Activated B cell treated with CpG ODN at 0.5 μM for 24 hours (primary cell): ENCODE measurements at regions of chr14 and their contacts with region 1.

Region 1: DNA sequence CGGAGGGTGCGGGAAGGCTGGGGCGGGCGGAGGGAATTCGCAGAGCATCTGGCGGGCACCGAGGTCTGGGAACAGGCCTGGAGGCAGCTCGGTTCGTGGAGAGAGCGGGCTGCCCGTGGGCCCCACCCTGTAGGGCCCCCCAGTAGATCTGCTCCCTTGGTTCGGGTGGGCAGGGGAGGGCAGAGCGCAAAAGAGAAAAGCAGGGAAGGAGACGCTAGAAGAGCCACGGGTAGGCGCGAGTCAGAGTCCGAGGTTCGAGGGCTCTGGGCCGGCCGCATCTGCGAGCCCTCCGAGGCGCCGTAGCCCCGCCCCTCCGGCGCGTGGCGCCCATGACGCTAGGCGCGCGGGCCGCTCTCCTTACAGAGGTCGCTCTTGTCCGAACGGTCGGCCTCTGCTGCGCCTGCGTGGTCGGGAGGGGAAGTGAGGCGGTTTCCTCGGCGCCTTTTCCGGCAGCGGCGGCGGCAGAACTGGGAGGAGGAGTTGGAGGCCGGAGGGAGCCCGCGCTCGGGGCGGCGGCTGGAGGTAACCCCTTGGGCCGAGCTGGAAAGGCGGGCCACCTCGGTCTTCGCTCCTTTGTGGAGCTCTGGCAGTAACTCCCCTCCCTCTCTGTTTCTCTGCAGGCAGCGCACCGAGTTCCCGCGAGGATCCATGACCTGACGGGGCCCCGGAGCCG is at the start of gene ARF6:
- DNase-seq: peak; percentile 98
- ATAC-seq: peak; percentile 85
- H3K4me3 Mint-ChIP-seq: peak within 1 kb of the TSS; percentile 96
- H3K27ac Mint-ChIP-seq: peak within 1 kb of the TSS; percentile 98
- H3K4me1 Mint-ChIP-seq: peaks cover 38% of the 10 kb centered on the region
- H3K27me3 Mint-ChIP-seq: no peaks in the 10 kb centered on the region
- CTCF ChIP-seq: no peak
- total RNA-seq, gene ARF6: 136 and 142 TPM in 2 replicates

Region 2: GRCh38 chr14:49879683-49880204 is 13.0 kb before region 1 on chr14:
- CTCF ChIA-PET with region 1: interaction called, 7 read pairs
- POLR2A ChIA-PET with region 1: interaction called, 21 read pairs
- intact Hi-C with region 1: loop called (anchors 1 kb)
- DNase-seq: no peak
- ATAC-seq: peak; percentile 90
- H3K4me3 Mint-ChIP-seq: no peak overlapping the region
- H3K27ac Mint-ChIP-seq: peak overlapping the region; percentile 47
- H3K4me1 Mint-ChIP-seq: peaks cover 14% of the 10 kb centered on the region
- H3K27me3 Mint-ChIP-seq: no peaks in the 10 kb centered on the region
- CTCF ChIP-seq: no peak

Region 3: GRCh38 chr14:49940808-49941421 is 48.1 kb after region 1 on chr14:
- CTCF ChIA-PET with region 1: interaction called, 3 read pairs
- POLR2A ChIA-PET with region 1: interaction called, 12 read pairs
- intact Hi-C with region 1: no loop called
- DNase-seq: no peak
- ATAC-seq: peak; percentile 42
- H3K4me3 Mint-ChIP-seq: peak overlapping the region; percentile 7
- H3K27ac Mint-ChIP-seq: peak overlapping the region; percentile 61
- H3K4me1 Mint-ChIP-seq: peaks cover 42% of the 10 kb centered on the region
- H3K27me3 Mint-ChIP-seq: no peaks in the 10 kb centered on the region
- CTCF ChIP-seq: no peak

Region 4: DNA sequence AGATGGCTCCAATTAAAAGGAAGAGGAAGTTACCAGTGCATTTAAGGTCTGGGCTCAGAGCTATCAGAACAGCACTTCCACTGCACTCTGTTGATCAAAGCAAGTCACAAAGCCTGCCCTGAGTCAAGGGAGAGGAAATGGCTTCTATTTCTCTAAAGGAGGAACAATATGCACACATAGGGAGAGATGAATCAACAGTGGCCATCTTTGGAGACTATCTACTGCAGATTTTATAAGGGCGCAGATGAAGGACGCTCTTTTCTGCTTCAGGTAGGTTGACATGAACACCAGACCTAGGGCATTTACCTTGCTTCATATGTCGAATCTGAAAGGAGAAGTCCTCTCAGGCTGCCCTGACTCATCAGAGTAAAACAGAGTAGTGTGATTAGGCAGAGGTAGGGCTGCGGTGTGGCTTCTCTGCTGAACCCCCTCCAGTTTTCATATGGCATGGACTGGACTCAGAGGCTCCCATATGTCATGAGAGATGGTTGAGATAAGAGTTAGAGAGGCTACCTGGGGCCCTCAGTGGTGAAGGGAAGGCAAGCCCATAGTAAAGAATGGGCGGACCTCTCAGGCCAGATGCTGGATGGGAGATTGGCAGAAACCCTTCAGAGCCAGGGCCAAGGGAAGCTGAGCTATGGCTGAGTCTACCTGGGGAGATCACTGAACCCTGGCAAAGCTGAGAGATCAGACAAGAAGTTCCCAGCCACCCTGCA is 84.5 kb after region 1 on chr14:
- CTCF ChIA-PET with region 1: interaction called, 12 read pairs
- POLR2A ChIA-PET with region 1: interaction called, 69 read pairs
- intact Hi-C with region 1: loop called (anchors 1 kb)
- DNase-seq: no peak
- ATAC-seq: peak; percentile 87
- H3K4me3 Mint-ChIP-seq: peak overlapping the region; percentile 76
- H3K27ac Mint-ChIP-seq: peak overlapping the region; percentile 95
- H3K4me1 Mint-ChIP-seq: peaks cover 88% of the 10 kb centered on the region
- H3K27me3 Mint-ChIP-seq: no peaks in the 10 kb centered on the region
- CTCF ChIP-seq: no peak

Region 5: DNA sequence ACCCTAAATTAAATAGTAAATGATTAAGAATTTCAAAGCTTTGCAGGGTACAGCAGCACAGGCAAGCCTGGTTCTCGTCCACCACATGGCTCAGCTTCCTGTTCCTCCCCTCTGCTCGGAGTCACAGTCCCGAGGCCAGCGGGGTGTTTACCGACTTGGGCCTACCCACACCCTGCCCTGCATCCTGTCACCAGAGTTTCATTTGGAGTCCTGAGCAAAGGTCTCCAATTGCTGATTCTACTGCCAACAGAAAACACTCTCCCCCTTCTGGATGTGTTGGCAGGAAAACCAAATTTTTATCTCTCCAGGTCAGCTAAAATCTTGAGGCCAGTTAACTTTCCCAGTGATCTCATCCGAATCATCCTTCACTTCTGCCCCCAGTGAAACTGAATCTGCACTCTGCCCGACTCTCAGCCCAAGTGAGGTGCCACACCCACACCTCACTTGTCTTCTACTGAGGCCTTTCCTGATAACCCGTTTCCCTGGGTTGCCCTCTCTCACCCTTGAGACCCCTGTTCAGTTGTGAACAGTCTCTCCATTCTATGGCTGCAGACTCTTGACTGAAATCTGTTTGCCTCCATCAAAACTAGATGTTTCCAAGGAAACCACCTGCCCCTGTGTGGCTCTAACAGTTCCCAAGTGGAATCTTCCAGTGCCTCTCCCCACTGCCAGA is 152.4 kb after region 1 on chr14:
- CTCF ChIA-PET with region 1: interaction called, 3 read pairs
- POLR2A ChIA-PET with region 1: interaction called, 13 read pairs
- intact Hi-C with region 1: loop called (anchors 1 kb)
- DNase-seq: no peak
- ATAC-seq: peak; percentile 70
- H3K4me3 Mint-ChIP-seq: peak overlapping the region; percentile 2
- H3K27ac Mint-ChIP-seq: peak overlapping the region; percentile 92
- H3K4me1 Mint-ChIP-seq: peaks cover 71% of the 10 kb centered on the region
- H3K27me3 Mint-ChIP-seq: no peaks in the 10 kb centered on the region
- CTCF ChIP-seq: no peak

Region 6: DNA sequence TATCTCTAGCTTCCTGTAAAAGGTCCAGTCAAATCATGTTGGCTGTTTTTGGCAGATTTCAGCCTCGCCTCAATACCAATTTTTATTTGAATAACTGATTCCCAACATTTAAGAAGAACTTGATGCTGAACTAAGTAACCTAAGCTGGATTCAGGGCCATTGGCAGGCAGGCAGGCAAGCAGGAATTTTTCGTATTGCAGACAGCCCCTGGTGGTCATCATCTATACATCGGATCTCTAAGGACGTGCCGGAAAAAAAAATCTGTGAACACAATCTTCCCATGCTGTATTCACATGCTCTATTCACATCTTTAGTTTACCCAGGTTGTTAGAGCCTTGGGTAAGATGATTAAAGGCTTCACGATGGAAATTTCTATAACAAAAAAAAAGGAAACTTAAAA is 216.6 kb after region 1 on chr14:
- CTCF ChIA-PET with region 1: interaction called, 8 read pairs
- POLR2A ChIA-PET with region 1: interaction called, 20 read pairs
- intact Hi-C with region 1: loop called (anchors 1 kb)
- DNase-seq: no peak
- ATAC-seq: no peak
- H3K4me3 Mint-ChIP-seq: no peak overlapping the region
- H3K27ac Mint-ChIP-seq: peak overlapping the region; percentile 20
- H3K4me1 Mint-ChIP-seq: peaks cover 46% of the 10 kb centered on the region
- H3K27me3 Mint-ChIP-seq: no peaks in the 10 kb centered on the region
- CTCF ChIP-seq: no peak